ENCODE measurements at regions of chr2 and their contacts with region 1.

Region 1: DNA sequence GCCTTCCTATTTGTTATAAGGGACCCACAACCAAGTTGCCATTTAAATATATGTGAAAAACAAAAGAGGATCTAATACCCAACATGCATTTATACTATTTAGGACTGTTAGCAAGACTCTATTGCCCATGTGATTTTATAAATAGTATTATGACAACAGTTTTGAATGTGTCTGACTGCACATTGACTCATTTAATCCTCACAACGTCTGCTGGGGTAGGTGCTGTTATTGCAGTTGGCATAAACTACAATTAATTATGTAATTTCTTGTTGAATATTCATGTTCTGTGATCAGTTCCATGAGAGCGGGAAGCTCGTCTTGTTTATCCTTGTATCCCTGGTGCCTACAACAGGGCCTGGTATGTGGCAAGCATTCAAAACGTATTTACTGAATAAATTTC is 53.7 kb downstream of the SH2D6 start:
- DNase-seq: no peak
- ATAC-seq: no peak
- H3K4me3 ChIP-seq: no peak overlapping the region
- H3K4me3 Mint-ChIP-seq: no peak overlapping the region
- H3K27ac ChIP-seq: no peak overlapping the region
- H3K27ac Mint-ChIP-seq: no peak overlapping the region
- H3K4me1 ChIP-seq: peaks cover 0 to 4% of the 10 kb centered on the region in 2 experiments
- H3K4me1 Mint-ChIP-seq: peaks cover 0 to 3% (median 2%) of the 10 kb centered on the region in 3 donors
- H3K27me3 ChIP-seq: no peaks in the 10 kb centered on the region
- H3K27me3 Mint-ChIP-seq: peaks cover 0 to 2% of the 10 kb centered on the region in 2 donors

Region 2: GRCh38 chr2:85209887-85210286 is 262.4 kb before region 1 on chr2:
- CTCF ChIA-PET with region 1: no interaction called
- POLR2A ChIA-PET with region 1: no interaction called
- DNase-seq: no peak
- ATAC-seq: no peak
- H3K4me3 ChIP-seq: no peak overlapping the region
- H3K4me3 Mint-ChIP-seq: no peak overlapping the region
- H3K27ac ChIP-seq: no peak overlapping the region
- H3K27ac Mint-ChIP-seq: no peak overlapping the region
- H3K4me1 ChIP-seq: no peaks in the 10 kb centered on the region
- H3K4me1 Mint-ChIP-seq: no peaks in the 10 kb centered on the region
- H3K27me3 ChIP-seq: peaks cover 0 to 25% of the 10 kb centered on the region in 2 experiments
- H3K27me3 Mint-ChIP-seq: peaks cover 24 to 38% of the 10 kb centered on the region in 2 donors

Region 3: GRCh38 chr2:85437488-85438284 is 34.6 kb before region 1 on chr2:
- CTCF ChIA-PET with region 1: no interaction called
- POLR2A ChIA-PET with region 1: interaction called in 1 of 2 experiments, 17 read pairs
- DNase-seq: peak; percentile 46 to 88 (median 68)
- ATAC-seq: peak; percentile 83 to 88 (median 86)
- H3K4me3 ChIP-seq: peak overlapping the region; percentile 49 to 55
- H3K4me3 Mint-ChIP-seq: peak overlapping the region; percentile 79 to 86 (median 83)
- H3K27ac ChIP-seq: peak overlapping the region; percentile 89
- H3K27ac Mint-ChIP-seq: peak overlapping the region; percentile 95 to 97
- H3K4me1 ChIP-seq: peaks cover 5 to 35% of the 10 kb centered on the region in 2 experiments
- H3K4me1 Mint-ChIP-seq: peaks cover 24 to 27% (median 26%) of the 10 kb centered on the region in 3 donors
- H3K27me3 ChIP-seq: peaks cover 0 to 3% of the 10 kb centered on the region in 2 experiments
- H3K27me3 Mint-ChIP-seq: no peaks in the 10 kb centered on the region

Measured in T-cell (primary cell).